Body of pancreas (tissue), 4 donors: ENCODE measurements at regions of chr4 and their contacts with region 1.

Region 1: DNA sequence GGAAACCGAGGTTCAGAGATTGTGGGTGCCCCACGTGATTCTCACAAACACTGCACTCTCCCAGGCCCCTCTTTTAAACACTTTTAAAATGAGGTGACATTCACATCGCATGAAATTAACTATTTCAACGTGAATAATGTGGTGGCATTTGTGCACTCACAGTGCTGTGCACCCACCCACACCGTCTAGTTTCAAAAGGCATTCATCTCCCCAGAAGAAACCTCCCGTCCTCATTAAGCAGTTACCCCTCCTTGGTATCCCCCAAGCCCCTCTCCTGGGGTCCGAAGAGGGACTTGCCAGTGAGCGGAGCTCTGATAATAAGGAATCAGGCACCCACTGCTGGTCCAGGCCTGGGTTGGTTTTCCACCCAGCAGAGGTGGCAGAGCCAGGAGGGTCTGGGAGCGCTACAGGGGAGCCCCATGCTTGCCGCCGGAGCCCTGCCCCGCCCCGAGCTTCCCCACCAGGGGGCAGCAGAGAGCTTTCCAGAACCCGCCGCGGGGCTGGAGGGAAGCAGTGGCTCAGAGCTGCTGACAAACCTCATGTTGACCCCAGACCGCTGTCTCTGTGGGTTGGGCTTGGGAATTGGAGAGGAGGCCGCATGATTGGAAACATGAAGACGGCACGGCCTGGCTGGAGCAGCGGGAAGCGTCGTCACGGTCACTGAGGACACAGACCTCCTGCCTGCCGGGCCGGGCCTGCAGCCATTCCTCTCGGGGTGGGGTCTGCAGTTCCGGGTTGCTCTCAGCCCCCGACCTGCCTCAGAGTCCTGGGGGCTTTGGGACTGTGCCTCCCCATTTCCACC is 27.5 kb upstream of the HTRA3 start:
- DNase-seq: peak; percentile 73 to 81 (median 76)
- ATAC-seq: peak; percentile 81
- H3K4me3 ChIP-seq: no peak overlapping the region
- H3K27ac ChIP-seq: no peak overlapping the region
- H3K4me1 ChIP-seq: no peaks in the 10 kb centered on the region
- H3K27me3 ChIP-seq: no peaks in the 10 kb centered on the region
- CTCF ChIP-seq: peak; percentile 78 to 98 (median 81)
- POLR2A ChIP-seq: no peak

Region 2: GRCh38 chr4:8403173-8403753 is 161.2 kb after region 1 on chr4:
- intact Hi-C with region 1: loop called (anchors 10 kb)
- DNase-seq: peak; percentile 66 to 79 (median 72)
- ATAC-seq: peak; percentile 73
- H3K4me3 ChIP-seq: no peak overlapping the region
- H3K27ac ChIP-seq: no peak overlapping the region
- H3K4me1 ChIP-seq: no peaks in the 10 kb centered on the region
- H3K27me3 ChIP-seq: no peaks in the 10 kb centered on the region
- CTCF ChIP-seq: peak; percentile 62 to 86 (median 69)
- POLR2A ChIP-seq: no peak